ENCODE measurements at regions of chr2 and their contacts with region 1.

Region 1: GRCh38 chr2:230262246-230262645 is 36.7 kb downstream of the SP140 start:
- DNase-seq: peak in 2 of 9 experiments; percentile 40 to 70
- ATAC-seq: peak; percentile 94
- H3K4me3 ChIP-seq: no peak overlapping the region
- H3K4me3 Mint-ChIP-seq: peak overlapping the region; percentile 58
- H3K27ac ChIP-seq: peak overlapping the region; percentile 39 to 58
- H3K27ac Mint-ChIP-seq: peak overlapping the region; percentile 81
- H3K4me1 ChIP-seq: peaks cover 22% of the 10 kb centered on the region
- H3K4me1 Mint-ChIP-seq: peaks cover 50% of the 10 kb centered on the region
- H3K27me3 ChIP-seq: no peaks in the 10 kb centered on the region
- H3K27me3 Mint-ChIP-seq: no peaks in the 10 kb centered on the region
- CTCF ChIP-seq: no peak

Region 2: GRCh38 chr2:229492034-229492433 is 770.2 kb before region 1 on chr2:
- CTCF ChIA-PET with region 1: no interaction called
- POLR2A ChIA-PET with region 1: no interaction called
- intact Hi-C with region 1: no loop called
- DNase-seq: no peak
- ATAC-seq: no peak
- H3K4me3 ChIP-seq: no peak overlapping the region
- H3K4me3 Mint-ChIP-seq: no peak overlapping the region
- H3K27ac ChIP-seq: no peak overlapping the region
- H3K27ac Mint-ChIP-seq: no peak overlapping the region
- H3K4me1 ChIP-seq: no peaks in the 10 kb centered on the region
- H3K4me1 Mint-ChIP-seq: no peaks in the 10 kb centered on the region
- H3K27me3 ChIP-seq: peaks cover 0 to 3% of the 10 kb centered on the region in 2 experiments
- H3K27me3 Mint-ChIP-seq: peaks cover 11% of the 10 kb centered on the region
- CTCF ChIP-seq: no peak

Region 3: GRCh38 chr2:230137902-230138566 is 124.2 kb before region 1 on chr2:
- CTCF ChIA-PET with region 1: no interaction called
- POLR2A ChIA-PET with region 1: no interaction called
- intact Hi-C with region 1: no loop called
- DNase-seq: no peak
- ATAC-seq: no peak
- H3K4me3 ChIP-seq: no peak overlapping the region
- H3K4me3 Mint-ChIP-seq: no peak overlapping the region
- H3K27ac ChIP-seq: no peak overlapping the region
- H3K27ac Mint-ChIP-seq: no peak overlapping the region
- H3K4me1 ChIP-seq: no peaks in the 10 kb centered on the region
- H3K4me1 Mint-ChIP-seq: no peaks in the 10 kb centered on the region
- H3K27me3 ChIP-seq: no peaks in the 10 kb centered on the region
- H3K27me3 Mint-ChIP-seq: no peaks in the 10 kb centered on the region
- CTCF ChIP-seq: no peak

Region 4: GRCh38 chr2:230225486-230225885 is 36.8 kb before region 1 on chr2 and contains the start of gene SP140:
- CTCF ChIA-PET with region 1: no interaction called
- POLR2A ChIA-PET with region 1: no interaction called
- intact Hi-C with region 1: loop called in 1 of 2 experiments (anchors 5 kb)
- DNase-seq: peak; percentile 51 to 94 (median 73)
- ATAC-seq: peak; percentile 89
- H3K4me3 ChIP-seq: peak within 1 kb of the TSS; percentile 50 to 66
- H3K4me3 Mint-ChIP-seq: peak within 1 kb of the TSS; percentile 81
- H3K27ac ChIP-seq: peak within 1 kb of the TSS; percentile 57 to 95
- H3K27ac Mint-ChIP-seq: peak within 1 kb of the TSS; percentile 94
- H3K4me1 ChIP-seq: peaks cover 22% of the 10 kb centered on the region
- H3K4me1 Mint-ChIP-seq: peaks cover 57% of the 10 kb centered on the region
- H3K27me3 ChIP-seq: no peaks in the 10 kb centered on the region
- H3K27me3 Mint-ChIP-seq: no peaks in the 10 kb centered on the region
- CTCF ChIP-seq: no peak
- total RNA-seq, gene SP140: 48.6 to 49.3 TPM

Region 5: DNA sequence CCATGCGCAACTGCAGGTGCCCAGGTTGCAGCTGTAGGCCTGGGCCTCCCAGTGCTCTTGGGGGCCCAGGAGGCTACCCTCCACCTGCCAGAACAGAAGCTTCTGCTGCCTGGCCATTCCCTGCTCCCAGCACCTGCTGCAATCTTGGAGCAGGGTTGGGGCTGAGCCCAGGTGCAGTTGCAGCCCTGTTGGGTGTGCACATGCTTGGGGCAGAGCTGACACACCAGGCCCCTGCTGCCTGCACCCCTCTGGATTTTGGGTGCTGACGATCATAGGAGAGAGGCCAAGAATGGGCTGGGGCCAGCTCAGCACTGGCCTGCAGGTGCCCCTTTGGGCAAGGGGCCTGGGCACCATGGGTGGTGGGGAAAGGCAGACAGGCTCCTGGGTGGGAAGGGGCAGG is 44.2 kb after region 1 on chr2:
- CTCF ChIA-PET with region 1: no interaction called
- POLR2A ChIA-PET with region 1: no interaction called
- intact Hi-C with region 1: no loop called
- DNase-seq: no peak
- ATAC-seq: no peak
- H3K4me3 ChIP-seq: no peak overlapping the region
- H3K4me3 Mint-ChIP-seq: no peak overlapping the region
- H3K27ac ChIP-seq: no peak overlapping the region
- H3K27ac Mint-ChIP-seq: no peak overlapping the region
- H3K4me1 ChIP-seq: no peaks in the 10 kb centered on the region
- H3K4me1 Mint-ChIP-seq: peaks cover under 1% of the 10 kb centered on the region
- H3K27me3 ChIP-seq: no peaks in the 10 kb centered on the region
- H3K27me3 Mint-ChIP-seq: no peaks in the 10 kb centered on the region
- CTCF ChIP-seq: no peak

Region 6: DNA sequence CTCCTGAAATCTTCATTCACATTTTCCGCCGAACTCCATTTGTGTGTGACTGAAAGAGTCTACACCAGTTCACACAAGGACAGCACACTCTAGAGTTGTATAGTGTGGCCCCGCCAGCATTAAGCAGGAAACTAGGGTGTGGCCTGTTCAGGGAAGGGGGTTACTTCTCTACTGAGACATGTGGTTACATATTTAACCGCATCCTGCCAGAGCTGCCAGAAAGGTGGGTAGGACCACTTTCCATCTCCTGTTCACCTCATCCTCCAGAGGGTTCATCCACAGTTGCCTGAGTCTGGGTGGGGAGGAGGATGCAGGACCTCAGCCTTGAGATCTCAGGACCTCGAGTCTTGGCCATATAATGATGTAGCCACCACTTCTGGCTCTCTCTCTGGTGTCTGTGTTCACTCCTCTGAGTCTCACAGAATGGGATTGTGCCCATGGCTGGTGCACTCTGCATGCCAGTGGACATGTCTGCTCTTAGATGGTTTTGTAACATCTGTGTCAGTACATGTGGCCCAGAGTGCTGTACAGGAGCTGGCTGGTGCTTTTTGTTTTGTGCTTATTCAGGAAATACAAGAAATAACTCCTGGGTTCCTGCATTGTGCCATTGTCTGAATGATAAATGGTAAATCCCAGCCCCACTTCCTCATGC is 57.1 kb after region 1 on chr2:
- CTCF ChIA-PET with region 1: no interaction called
- POLR2A ChIA-PET with region 1: no interaction called
- intact Hi-C with region 1: loop called (anchors 2 to 5 kb)
- DNase-seq: peak; percentile 37 to 92 (median 76)
- ATAC-seq: peak; percentile 96
- H3K4me3 ChIP-seq: peak overlapping the region; percentile 7 to 24
- H3K4me3 Mint-ChIP-seq: peak overlapping the region; percentile 63
- H3K27ac ChIP-seq: peak overlapping the region; percentile 58 to 61
- H3K27ac Mint-ChIP-seq: peak overlapping the region; percentile 89
- H3K4me1 ChIP-seq: peaks cover 52% of the 10 kb centered on the region
- H3K4me1 Mint-ChIP-seq: peaks cover 69% of the 10 kb centered on the region
- H3K27me3 ChIP-seq: no peaks in the 10 kb centered on the region
- H3K27me3 Mint-ChIP-seq: no peaks in the 10 kb centered on the region
- CTCF ChIP-seq: no peak

Measured in CD8-positive, alpha-beta T cell (primary cell).